ENCODE measurements at regions of chr7 and their contacts with region 1.

Region 1: GRCh38 chr7:94509879-94510581 is 421 bp downstream of the CASD1 start:
- DNase-seq: peak; percentile 66
- H3K4me3 Mint-ChIP-seq: peak overlapping the region; percentile 78
- H3K27ac Mint-ChIP-seq: peak overlapping the region; percentile 83
- H3K4me1 Mint-ChIP-seq: peaks cover 41% of the 10 kb centered on the region
- H3K27me3 Mint-ChIP-seq: no peaks in the 10 kb centered on the region

Region 2: DNA sequence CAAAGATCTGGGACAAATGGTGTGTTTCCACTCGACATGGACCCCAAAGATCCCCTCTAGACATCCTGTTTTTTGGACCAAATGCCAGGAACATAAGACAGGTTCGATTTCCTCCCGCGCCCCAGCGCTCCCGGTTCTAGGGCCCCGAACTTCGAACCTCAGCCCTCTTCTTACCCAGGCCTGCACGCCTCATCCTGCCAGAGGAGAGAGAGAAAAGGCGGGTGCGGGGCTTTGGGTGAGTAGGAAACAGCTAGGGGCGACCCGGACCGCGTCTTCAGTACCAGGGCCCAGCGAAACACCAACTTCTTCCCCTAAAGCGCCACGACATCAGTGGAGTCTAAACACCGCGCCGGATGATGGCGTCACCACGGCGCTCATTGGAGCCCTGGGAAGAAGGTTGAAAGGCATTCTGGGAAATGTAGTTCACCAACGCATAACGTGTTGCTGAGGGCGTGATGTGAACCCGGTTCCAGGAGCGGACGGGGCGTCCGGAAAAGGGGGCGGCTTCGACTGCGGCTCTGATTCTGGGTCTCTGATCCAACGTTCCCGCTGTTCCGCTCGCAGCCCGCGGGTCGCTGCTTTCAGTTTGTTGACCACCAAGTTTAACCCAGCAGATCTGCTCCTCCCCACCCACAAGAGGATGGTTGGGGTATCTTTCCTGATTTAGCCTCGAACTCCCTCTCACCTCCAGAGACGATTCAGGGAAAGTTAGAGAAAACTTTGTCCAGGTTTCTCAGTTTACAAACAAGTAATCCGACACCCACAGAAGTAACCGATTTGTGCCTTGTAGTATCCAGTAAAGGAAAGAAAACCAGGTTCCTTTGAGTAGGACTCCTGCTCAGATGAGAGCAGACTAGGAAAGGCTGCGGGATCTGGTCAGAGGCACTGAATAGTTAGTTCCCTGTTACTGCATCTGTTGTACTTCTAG is 505.7 kb before region 1 on chr7 and contains the start of gene BET1:
- CTCF ChIA-PET with region 1: no interaction called
- intact Hi-C with region 1: loop called (anchors 2 kb)
- DNase-seq: peak; percentile 94
- H3K4me3 Mint-ChIP-seq: peak within 1 kb of the TSS; percentile 99
- H3K27ac Mint-ChIP-seq: peak within 1 kb of the TSS; percentile 94
- H3K4me1 Mint-ChIP-seq: peaks cover 34% of the 10 kb centered on the region
- H3K27me3 Mint-ChIP-seq: peaks cover 6% of the 10 kb centered on the region
- total RNA-seq, gene BET1: 21.5 to 25.9 TPM

Region 3: DNA sequence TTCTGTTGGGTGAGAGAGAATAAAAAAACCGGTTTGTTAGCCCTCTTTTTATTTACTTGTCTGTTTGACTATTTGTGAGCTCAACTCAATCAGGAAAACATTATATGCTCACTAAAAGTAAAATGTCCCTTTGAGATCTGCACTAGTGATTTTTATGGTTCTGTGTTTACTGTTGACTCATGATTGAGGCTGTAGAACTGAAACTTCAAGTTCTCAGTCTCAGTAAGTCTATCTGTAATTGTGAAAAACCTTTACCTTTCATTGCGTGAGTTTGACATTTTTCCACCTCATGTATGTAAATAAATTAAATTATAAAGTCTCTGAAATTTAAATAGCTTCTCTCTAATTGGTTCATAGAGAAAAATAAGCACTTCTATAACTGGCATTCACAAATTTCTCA is 17.4 kb before region 1 on chr7:
- CTCF ChIA-PET with region 1: no interaction called
- intact Hi-C with region 1: loop called (anchors 2 kb)
- DNase-seq: no peak
- H3K4me3 Mint-ChIP-seq: no peak overlapping the region
- H3K27ac Mint-ChIP-seq: no peak overlapping the region
- H3K4me1 Mint-ChIP-seq: peaks cover 2% of the 10 kb centered on the region
- H3K27me3 Mint-ChIP-seq: peaks cover 18% of the 10 kb centered on the region

Region 4: GRCh38 chr7:94657771-94658693 is 148.0 kb after region 1 on chr7:
- CTCF ChIA-PET with region 1: no interaction called
- intact Hi-C with region 1: loop called (anchors 1 kb)
- DNase-seq: peak; percentile 95
- H3K4me3 Mint-ChIP-seq: peak overlapping the region; percentile 84
- H3K27ac Mint-ChIP-seq: no peak overlapping the region
- H3K4me1 Mint-ChIP-seq: peaks cover 13% of the 10 kb centered on the region
- H3K27me3 Mint-ChIP-seq: peaks cover 24% of the 10 kb centered on the region

Region 5: GRCh38 chr7:95501261-95501832 is 991.3 kb after region 1 on chr7:
- CTCF ChIA-PET with region 1: no interaction called
- intact Hi-C with region 1: loop called (anchors 2 kb)
- DNase-seq: peak; percentile 52
- H3K4me3 Mint-ChIP-seq: no peak overlapping the region
- H3K27ac Mint-ChIP-seq: peak overlapping the region; percentile 37
- H3K4me1 Mint-ChIP-seq: peaks cover 24% of the 10 kb centered on the region
- H3K27me3 Mint-ChIP-seq: peaks cover 25% of the 10 kb centered on the region